GM10248 (cell line): ENCODE measurements at regions of chr3 and their contacts with region 1.

Region 1: DNA sequence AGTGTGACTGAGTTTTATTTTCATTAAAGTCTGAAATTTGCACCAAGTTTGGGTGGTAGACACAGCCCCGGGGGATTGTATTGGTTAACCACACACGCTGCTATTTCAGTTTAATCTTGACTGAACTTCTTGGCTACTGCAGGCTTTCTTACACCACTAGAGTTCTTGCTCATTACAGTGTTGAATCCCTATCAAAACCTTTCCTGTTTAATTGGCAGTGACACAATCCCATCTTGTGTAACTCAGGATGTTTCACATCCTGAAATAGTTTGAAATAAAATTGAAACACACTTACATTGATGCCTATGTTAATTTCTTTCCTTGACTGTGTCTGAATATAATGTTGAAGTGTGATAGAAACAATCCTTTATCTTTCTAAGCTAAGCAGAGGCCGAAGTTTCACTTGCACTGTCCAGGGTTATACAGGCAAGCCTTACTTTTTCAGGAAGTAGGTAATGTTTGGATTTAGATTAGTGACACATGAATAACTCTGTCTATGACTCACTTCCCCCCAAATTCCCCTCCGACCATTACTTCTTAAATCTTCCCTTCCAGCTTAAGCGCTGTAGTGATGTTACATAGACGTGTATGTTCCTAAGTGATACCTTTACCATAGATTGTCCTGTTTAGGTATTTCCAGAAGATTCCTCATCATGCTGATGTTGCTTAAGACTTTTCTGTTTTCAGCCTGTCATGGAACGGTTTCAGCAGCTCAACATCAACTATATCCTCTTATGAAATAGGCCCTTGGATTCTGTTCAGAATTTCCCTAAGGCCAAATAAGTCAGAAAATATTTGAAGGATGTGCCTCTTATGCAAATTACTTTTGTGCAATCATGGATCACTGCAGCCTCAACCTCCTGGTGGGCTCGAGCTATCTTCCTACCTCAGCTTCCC is 16.8 kb downstream of the ATG7 start:
- DNase-seq: peak; percentile 44
- CTCF ChIP-seq: no peak

Region 2: DNA sequence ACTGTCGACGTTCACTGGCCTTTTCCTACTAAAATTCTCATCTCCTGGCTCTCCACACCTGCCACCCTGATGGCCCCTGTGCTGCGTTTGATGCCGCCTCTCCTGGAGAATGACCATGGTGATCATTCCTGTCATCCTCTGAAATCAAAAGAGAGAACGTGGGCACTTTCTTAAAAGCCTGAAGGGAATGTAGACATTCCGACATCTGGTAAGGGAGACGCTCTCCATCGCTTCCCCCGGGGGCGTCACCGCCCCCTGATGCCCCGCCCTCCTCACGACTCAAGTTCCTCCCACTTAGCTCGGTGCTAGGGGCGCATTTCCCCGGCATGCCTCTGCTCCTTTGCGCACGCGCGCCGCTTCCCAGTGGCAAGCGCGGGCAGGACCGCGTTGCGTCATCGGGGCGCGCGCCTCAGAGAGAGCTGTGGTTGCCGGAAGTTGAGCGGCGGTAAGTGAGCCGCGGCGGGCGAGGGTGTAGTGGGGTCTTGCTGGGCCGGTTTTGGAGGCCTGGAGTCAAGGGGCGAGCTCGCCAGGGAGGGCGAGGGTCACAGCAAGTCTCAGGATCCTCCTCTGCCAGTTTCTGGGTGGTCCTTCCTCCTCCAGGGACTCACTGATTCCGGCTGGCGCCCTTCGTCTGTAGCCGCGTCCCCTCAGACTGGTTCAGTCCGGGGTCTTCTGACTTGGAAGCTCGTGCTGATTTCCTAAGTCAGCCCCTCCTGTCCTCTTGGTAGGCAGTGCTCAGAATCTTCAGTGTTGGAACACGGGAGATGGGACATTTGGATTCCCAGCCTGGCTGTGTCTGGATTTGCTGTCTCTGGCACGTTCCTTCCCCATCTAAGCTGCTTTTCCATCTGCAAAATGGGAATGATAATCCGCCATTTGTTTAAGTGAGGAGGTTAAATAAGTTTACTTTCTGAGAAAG is 16.8 kb before region 1 on chr3 and contains the start of gene ATG7:
- CTCF ChIA-PET with region 1: interaction called, 39 read pairs
- POLR2A ChIA-PET with region 1: interaction called, 8 read pairs
- DNase-seq: peak; percentile 98
- CTCF ChIP-seq: no peak